GM12878 (cell line): ENCODE measurements at regions of chr7 and their contacts with region 1.

Region 1: GRCh38 chr7:95421000-95421846 is 13.6 kb downstream of the PON2 start:
- DNase-seq: no peak
- ATAC-seq: peak; percentile 83
- H3K4me3 ChIP-seq: no peak overlapping the region
- H3K27ac ChIP-seq: no peak overlapping the region
- H3K4me1 ChIP-seq: no peaks in the 10 kb centered on the region
- H3K27me3 ChIP-seq: no peaks in the 10 kb centered on the region
- CTCF ChIP-seq: no peak
- EP300 ChIP-seq: no peak
- POLR2A ChIP-seq: no peak
- RAD21 ChIP-seq: no peak

Region 2: GRCh38 chr7:95132500-95132899 is 288.7 kb before region 1 on chr7:
- CTCF ChIA-PET with region 1: no interaction called
- POLR2A ChIA-PET with region 1: no interaction called
- RAD21 ChIA-PET with region 1: no interaction called
- SMC1A ChIA-PET with region 1: no interaction called
- in situ Hi-C with region 1: no loop called
- intact Hi-C with region 1: no loop called
- DNase-seq: no peak
- ATAC-seq: no peak
- H3K4me3 ChIP-seq: no peak overlapping the region
- H3K27ac ChIP-seq: no peak overlapping the region
- H3K4me1 ChIP-seq: no peaks in the 10 kb centered on the region
- H3K27me3 ChIP-seq: no peaks in the 10 kb centered on the region
- CTCF ChIP-seq: no peak
- EP300 ChIP-seq: no peak
- POLR2A ChIP-seq: no peak
- RAD21 ChIP-seq: no peak

Region 3: DNA sequence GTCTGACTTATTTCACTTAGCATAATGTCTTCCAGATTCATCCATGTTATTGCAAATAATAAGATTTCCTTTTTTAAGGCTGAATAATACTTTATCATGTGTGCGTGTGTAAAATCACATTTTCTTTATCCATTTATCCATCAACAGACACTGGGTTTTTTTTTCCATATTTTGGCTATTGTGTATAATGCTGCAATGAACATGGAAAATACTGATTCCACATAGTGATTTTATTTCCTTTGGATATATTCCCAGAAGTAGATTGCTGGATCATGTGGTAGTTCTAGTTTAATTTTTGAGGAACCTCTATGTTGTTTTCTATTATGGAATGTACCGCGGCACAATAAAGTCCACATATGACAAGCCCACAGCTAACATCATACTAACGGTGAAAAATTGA is 277.0 kb before region 1 on chr7:
- CTCF ChIA-PET with region 1: no interaction called
- POLR2A ChIA-PET with region 1: no interaction called
- RAD21 ChIA-PET with region 1: no interaction called
- SMC1A ChIA-PET with region 1: no interaction called
- in situ Hi-C with region 1: no loop called
- intact Hi-C with region 1: no loop called
- DNase-seq: no peak
- ATAC-seq: no peak
- H3K4me3 ChIP-seq: no peak overlapping the region
- H3K27ac ChIP-seq: no peak overlapping the region
- H3K4me1 ChIP-seq: no peaks in the 10 kb centered on the region
- H3K27me3 ChIP-seq: no peaks in the 10 kb centered on the region
- CTCF ChIP-seq: no peak
- EP300 ChIP-seq: no peak
- POLR2A ChIP-seq: no peak
- RAD21 ChIP-seq: no peak

Region 4: GRCh38 chr7:95501261-95501832 is 80.1 kb after region 1 on chr7:
- CTCF ChIA-PET with region 1: interaction called, 5 read pairs
- POLR2A ChIA-PET with region 1: no interaction called
- RAD21 ChIA-PET with region 1: interaction called, 14 read pairs
- SMC1A ChIA-PET with region 1: no interaction called
- in situ Hi-C with region 1: no loop called
- intact Hi-C with region 1: no loop called
- DNase-seq: peak; percentile 87
- ATAC-seq: peak; percentile 78
- H3K4me3 ChIP-seq: peak overlapping the region; percentile 34; the same call in 1 of the 2 replicates
- H3K27ac ChIP-seq: peak overlapping the region; percentile 56
- H3K4me1 ChIP-seq: peaks cover 8% of the 10 kb centered on the region
- H3K27me3 ChIP-seq: no peaks in the 10 kb centered on the region
- CTCF ChIP-seq: no peak
- EP300 ChIP-seq: peak; percentile 96 to 97
- POLR2A ChIP-seq: no peak
- RAD21 ChIP-seq: no peak